Activated T-helper 2 cell treated with anti-CD3 and anti-CD28 coated beads, Interferon-gamma antibody, Interleukin-2, Interleukin-4, amounts not matched to agents 10 μg/mL and 5 μg/mL and 100 μg/mL, durations not matched to agents 14 hours and 24 hours and 36 hours (primary cell): ENCODE measurements at regions of chr15 and their contacts with region 1.

Region 1: DNA sequence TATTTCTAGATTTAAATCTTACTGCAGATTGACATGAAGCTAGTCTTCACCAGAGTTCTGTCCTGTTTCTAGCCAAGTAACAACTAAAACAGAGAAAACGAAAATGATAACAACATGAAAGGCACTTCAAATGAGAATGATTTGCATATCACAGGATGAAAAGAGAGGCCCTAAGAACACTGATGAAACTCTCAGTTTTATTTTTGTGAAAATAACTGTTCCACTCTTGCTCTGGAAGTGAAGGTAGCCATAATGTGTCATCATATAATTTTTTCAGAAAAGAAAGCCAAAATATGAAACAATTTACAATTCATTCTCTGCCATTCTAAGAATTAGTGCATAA is 274.4 kb downstream of the ADAMTSL3 start:
- DNase-seq: no peak
- H3K4me3 Mint-ChIP-seq: peak overlapping the region; percentile 57
- H3K27ac Mint-ChIP-seq: peak overlapping the region; percentile 91
- H3K4me1 Mint-ChIP-seq: peaks cover 39% of the 10 kb centered on the region
- H3K27me3 Mint-ChIP-seq: no peaks in the 10 kb centered on the region

Region 2: GRCh38 chr15:83890587-83890986 is 37.8 kb before region 1 on chr15:
- intact Hi-C with region 1: loop called (anchors 2 kb)
- DNase-seq: no peak
- H3K4me3 Mint-ChIP-seq: no peak overlapping the region
- H3K27ac Mint-ChIP-seq: no peak overlapping the region
- H3K4me1 Mint-ChIP-seq: peaks cover 14% of the 10 kb centered on the region
- H3K27me3 Mint-ChIP-seq: peaks cover 26% of the 10 kb centered on the region

Region 3: GRCh38 chr15:83943849-83944404 is 15.6 kb after region 1 on chr15:
- intact Hi-C with region 1: loop called (anchors 2 kb)
- DNase-seq: no peak
- H3K4me3 Mint-ChIP-seq: no peak overlapping the region
- H3K27ac Mint-ChIP-seq: no peak overlapping the region
- H3K4me1 Mint-ChIP-seq: peaks cover 8% of the 10 kb centered on the region
- H3K27me3 Mint-ChIP-seq: peaks cover 13% of the 10 kb centered on the region

Region 4: GRCh38 chr15:83992324-83993031 is 64.1 kb after region 1 on chr15:
- intact Hi-C with region 1: no loop called
- DNase-seq: no peak
- H3K4me3 Mint-ChIP-seq: no peak overlapping the region
- H3K27ac Mint-ChIP-seq: no peak overlapping the region
- H3K4me1 Mint-ChIP-seq: no peaks in the 10 kb centered on the region
- H3K27me3 Mint-ChIP-seq: peaks cover 6% of the 10 kb centered on the region